T-cell (primary cell): ENCODE measurements at regions of chr10 and their contacts with region 1.

Region 1: DNA sequence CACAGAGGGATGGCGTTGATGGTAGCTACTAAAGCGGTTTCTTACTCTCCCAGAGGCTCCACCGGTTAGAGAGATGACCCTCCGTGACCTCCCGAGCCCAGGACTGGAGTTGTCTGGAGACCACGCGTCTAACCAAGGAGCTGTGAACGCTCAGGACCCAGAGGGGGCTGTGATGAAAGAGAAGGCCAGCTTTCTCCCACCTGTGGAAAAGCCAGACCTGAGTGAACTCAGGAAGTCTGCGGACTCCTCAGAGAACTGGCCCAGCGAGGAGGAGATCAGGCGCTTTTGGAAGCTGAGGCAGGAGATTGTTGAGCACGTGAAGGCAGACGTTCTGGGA is 15.9 kb downstream of the LRRC27 start:
- DNase-seq: no peak
- ATAC-seq: no peak
- H3K4me3 ChIP-seq: no peak overlapping the region
- H3K4me3 Mint-ChIP-seq: no peak overlapping the region
- H3K27ac ChIP-seq: no peak overlapping the region
- H3K27ac Mint-ChIP-seq: no peak overlapping the region
- H3K4me1 ChIP-seq: peaks cover 0 to 2% of the 10 kb centered on the region in 2 experiments
- H3K4me1 Mint-ChIP-seq: peaks cover 0 to 3% (median 2%) of the 10 kb centered on the region in 3 donors
- H3K27me3 ChIP-seq: no peaks in the 10 kb centered on the region
- H3K27me3 Mint-ChIP-seq: no peaks in the 10 kb centered on the region

Region 2: GRCh38 chr10:131891196-131891928 is 456.5 kb before region 1 on chr10:
- CTCF ChIA-PET with region 1: no interaction called
- POLR2A ChIA-PET with region 1: no interaction called
- DNase-seq: no peak
- ATAC-seq: no peak
- H3K4me3 ChIP-seq: no peak overlapping the region
- H3K4me3 Mint-ChIP-seq: no peak overlapping the region
- H3K27ac ChIP-seq: no peak overlapping the region
- H3K27ac Mint-ChIP-seq: no peak overlapping the region
- H3K4me1 ChIP-seq: peaks cover 1 to 12% of the 10 kb centered on the region in 2 experiments
- H3K4me1 Mint-ChIP-seq: peaks cover 6 to 14% (median 12%) of the 10 kb centered on the region in 3 donors
- H3K27me3 ChIP-seq: peaks cover 0 to 24% of the 10 kb centered on the region in 2 experiments
- H3K27me3 Mint-ChIP-seq: peaks cover 3 to 8% of the 10 kb centered on the region in 2 donors

Region 3: DNA sequence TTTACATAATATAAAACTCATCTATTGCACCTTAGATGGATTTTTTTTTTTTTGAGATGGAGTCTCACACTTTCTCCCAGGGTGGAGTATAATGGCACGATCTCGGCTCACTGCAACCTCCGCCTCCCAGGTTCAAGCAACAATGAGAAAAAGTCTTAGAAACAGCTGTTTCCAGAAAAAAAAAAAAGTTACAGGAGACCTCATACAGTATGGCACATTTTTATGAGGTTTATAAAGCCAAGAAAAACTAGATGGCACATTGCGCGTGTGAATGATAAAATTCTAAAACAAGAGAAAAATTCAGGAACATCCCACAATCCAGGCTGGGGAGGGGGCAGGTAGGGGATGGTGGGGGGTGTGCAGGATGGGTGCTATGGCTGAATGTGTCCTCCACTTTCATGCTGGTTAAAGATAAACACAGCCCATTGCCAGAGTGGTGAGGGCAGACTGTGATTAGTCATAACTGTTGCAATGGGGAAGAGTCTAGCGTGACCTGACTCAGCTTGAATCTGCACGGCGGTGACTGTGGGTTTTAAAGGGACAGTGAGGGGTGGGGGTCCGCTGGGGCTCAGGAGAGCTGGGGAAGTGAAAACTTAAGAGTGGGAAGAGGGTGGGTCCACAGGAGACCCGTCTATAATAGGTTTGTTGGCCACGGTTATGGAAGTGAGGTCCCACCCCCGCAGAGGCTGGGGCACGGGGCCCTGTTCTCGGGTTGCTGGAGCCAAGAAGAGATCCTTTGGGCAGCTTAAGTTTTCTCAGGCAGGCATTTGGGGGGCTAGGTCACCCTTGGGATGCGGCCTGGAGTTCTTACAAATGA is 27.8 kb before region 1 on chr10:
- CTCF ChIA-PET with region 1: no interaction called
- POLR2A ChIA-PET with region 1: interaction called in 1 of 2 experiments, 10 read pairs
- DNase-seq: no peak
- ATAC-seq: peak in 1 of 4 experiments; percentile 53
- H3K4me3 ChIP-seq: no peak overlapping the region
- H3K4me3 Mint-ChIP-seq: no peak overlapping the region
- H3K27ac ChIP-seq: no peak overlapping the region
- H3K27ac Mint-ChIP-seq: no peak overlapping the region
- H3K4me1 ChIP-seq: no peaks in the 10 kb centered on the region
- H3K4me1 Mint-ChIP-seq: peaks cover 6 to 14% (median 10%) of the 10 kb centered on the region in 3 donors
- H3K27me3 ChIP-seq: no peaks in the 10 kb centered on the region
- H3K27me3 Mint-ChIP-seq: no peaks in the 10 kb centered on the region

Region 4: DNA sequence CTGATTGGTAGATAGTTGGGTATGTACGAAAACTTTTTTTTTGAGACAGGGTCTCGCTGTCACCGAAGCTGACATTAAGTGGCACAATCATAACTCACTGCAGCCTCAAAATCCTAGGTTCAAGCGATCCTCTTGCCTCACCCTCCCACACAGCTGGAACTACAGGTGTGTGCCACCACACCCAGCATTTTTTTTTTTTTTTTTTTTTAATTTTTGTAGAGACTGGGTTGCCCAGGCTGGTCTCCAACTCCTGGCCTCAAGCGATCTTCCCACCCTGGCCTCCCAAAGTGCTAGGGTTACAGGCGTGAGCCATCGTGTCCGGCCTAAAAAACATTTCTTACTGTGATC is 17.4 kb before region 1 on chr10:
- CTCF ChIA-PET with region 1: no interaction called
- POLR2A ChIA-PET with region 1: no interaction called
- DNase-seq: no peak
- ATAC-seq: no peak
- H3K4me3 ChIP-seq: peak overlapping the region; percentile 76 to 95
- H3K4me3 Mint-ChIP-seq: peak overlapping the region; percentile 76 to 85 (median 85)
- H3K27ac ChIP-seq: peak overlapping the region; percentile 36
- H3K27ac Mint-ChIP-seq: peak overlapping the region; percentile 84 to 87
- H3K4me1 ChIP-seq: peaks cover 21 to 28% of the 10 kb centered on the region in 2 experiments
- H3K4me1 Mint-ChIP-seq: peaks cover 44 to 64% (median 52%) of the 10 kb centered on the region in 3 donors
- H3K27me3 ChIP-seq: no peaks in the 10 kb centered on the region
- H3K27me3 Mint-ChIP-seq: no peaks in the 10 kb centered on the region